Motor neuron (in vitro differentiated cells): ENCODE measurements at regions of chr5 and their contacts with region 1.

Region 1: DNA sequence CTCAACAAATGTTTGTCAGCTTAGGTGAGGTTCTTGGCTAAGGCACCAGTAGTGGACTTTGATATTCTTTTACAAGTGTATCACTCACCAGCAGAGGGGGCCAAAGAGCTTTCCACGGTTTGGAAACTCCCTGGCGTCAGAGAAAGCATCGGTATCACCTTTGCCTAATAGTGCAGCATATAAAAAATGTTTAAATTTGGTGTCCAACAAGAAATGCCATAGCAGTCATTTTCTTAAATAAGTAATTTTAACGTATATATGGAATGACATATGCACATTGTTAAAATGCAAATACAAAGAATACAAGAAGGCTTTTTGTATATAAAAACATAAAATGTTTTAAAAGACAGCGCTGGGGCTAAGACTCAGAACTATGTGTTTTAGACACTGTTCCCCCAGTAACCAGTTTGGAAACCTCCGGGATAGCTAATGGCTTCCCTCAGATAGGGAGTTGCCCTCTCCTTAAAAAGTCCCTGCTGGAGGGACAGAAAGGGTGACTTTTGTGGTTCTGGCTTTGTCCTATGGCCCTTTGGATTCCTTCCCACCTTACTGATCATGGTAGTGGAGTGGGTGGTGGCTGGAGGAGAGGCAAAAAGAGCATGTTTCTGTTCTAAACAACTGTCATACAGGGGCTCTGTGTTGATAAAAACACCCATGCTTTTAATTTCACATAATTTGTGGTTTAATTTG is 124.6 kb downstream of the GPBP1 start:
- ATAC-seq: peak; percentile 74 to 90 (median 78)
- H3K4me3 ChIP-seq: no peak overlapping the region
- H3K27ac ChIP-seq: no peak overlapping the region
- H3K4me1 ChIP-seq: peaks cover 0 to 5% of the 10 kb centered on the region in 2 donors

Region 2: DNA sequence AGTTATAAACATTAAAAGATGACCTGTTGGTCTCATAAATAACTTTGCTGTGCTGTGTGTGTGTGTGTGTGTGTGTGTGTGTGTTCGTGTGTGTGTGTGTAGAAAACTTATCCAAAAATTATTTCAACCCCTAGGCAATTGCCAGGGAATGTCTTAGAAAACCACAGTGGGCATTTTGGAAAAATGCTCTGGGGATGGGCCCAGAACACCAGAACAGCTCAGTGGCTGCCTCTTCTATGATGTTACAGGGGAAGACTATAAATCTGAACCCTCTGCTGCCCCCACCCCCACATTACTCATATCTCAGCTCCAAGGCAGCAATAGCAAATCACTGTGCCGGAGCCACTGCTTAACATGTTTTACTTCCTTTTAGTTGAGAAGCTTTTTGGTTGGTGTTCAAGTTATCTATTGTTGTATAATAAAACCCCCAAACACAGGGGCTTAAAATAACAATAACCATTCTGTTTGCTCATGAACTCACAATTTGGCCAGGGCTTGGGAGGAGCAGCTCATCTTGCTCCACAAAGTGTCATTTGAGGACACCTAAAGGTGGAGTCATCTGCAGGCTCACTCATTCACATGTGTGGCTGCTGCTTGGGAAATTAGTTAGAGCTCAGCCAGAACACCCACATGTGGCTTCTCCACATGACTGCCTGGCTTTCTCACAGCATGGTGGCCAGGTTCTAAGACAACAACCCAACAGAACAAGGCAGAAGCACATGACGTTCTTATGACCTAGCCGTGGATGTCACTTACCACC is 143.8 kb after region 1 on chr5:
- in situ Hi-C with region 1: no loop called
- ATAC-seq: peak in 2 of 8 experiments; percentile 18 to 19
- H3K4me3 ChIP-seq: no peak overlapping the region
- H3K27ac ChIP-seq: no peak overlapping the region
- H3K4me1 ChIP-seq: no peaks in the 10 kb centered on the region

Region 3: GRCh38 chr5:57499262-57500050 is 201.0 kb after region 1 on chr5:
- in situ Hi-C with region 1: loop called in 2 of 9 experiments (anchors 25 kb)
- ATAC-seq: peak in 7 of 8 experiments; percentile 20 to 68 (median 52)
- H3K4me3 ChIP-seq: no peak overlapping the region
- H3K27ac ChIP-seq: no peak overlapping the region
- H3K4me1 ChIP-seq: peaks cover 2 to 10% of the 10 kb centered on the region in 2 donors

Region 4: GRCh38 chr5:57754616-57755015 is 456.2 kb after region 1 on chr5:
- in situ Hi-C with region 1: loop called in 1 of 9 experiments (anchors 25 kb)
- ATAC-seq: peak in 1 of 8 experiments; percentile 41
- H3K4me3 ChIP-seq: no peak overlapping the region
- H3K27ac ChIP-seq: no peak overlapping the region
- H3K4me1 ChIP-seq: no peaks in the 10 kb centered on the region

Region 5: DNA sequence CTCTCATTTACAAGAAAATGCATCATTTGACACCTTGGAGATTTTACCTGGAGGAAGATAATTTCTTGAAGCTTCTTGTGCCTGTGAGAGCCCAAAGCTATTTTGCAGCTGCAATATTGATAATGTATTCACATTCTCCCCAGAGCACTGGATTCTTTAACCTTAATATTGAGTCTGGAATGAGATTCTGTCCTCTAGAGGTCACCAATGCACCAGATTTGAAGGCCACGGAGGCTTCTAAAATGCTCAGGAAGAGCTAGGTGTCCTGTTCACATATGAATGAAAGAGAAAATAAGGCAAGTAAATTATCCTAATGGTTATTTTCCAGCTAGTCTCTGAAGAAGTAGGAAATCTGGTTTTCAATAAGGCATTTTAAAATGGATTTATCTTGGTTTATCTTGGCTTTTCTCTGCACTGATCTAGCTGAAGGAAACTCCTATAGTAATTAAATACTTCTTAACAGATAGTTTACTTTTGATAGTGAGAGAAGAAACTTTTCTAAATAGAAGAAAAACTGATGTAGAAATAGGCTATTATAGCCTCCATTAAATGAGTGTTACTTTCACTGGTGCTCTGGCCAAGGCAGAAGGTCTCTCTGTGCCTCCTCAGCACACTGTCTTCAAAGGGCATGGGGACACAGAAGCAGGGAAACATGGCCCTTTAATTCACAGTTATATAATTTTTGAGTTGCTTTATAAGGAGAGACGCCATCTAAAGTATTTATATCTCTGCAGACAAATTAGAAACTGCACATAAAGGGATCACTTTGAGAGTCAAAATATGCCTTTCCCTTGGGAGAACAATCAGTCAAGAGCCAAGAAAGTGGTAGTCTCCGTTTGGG is 481.2 kb after region 1 on chr5:
- in situ Hi-C with region 1: loop called in 3 of 9 experiments (anchors 25 kb)
- ATAC-seq: peak; percentile 58 to 96 (median 79)
- H3K4me3 ChIP-seq: no peak overlapping the region
- H3K27ac ChIP-seq: no peak overlapping the region
- H3K4me1 ChIP-seq: no peaks in the 10 kb centered on the region